CD4-positive, alpha-beta memory T cell (primary cell): ENCODE measurements at regions of chr14 and their contacts with region 1.

Region 1: DNA sequence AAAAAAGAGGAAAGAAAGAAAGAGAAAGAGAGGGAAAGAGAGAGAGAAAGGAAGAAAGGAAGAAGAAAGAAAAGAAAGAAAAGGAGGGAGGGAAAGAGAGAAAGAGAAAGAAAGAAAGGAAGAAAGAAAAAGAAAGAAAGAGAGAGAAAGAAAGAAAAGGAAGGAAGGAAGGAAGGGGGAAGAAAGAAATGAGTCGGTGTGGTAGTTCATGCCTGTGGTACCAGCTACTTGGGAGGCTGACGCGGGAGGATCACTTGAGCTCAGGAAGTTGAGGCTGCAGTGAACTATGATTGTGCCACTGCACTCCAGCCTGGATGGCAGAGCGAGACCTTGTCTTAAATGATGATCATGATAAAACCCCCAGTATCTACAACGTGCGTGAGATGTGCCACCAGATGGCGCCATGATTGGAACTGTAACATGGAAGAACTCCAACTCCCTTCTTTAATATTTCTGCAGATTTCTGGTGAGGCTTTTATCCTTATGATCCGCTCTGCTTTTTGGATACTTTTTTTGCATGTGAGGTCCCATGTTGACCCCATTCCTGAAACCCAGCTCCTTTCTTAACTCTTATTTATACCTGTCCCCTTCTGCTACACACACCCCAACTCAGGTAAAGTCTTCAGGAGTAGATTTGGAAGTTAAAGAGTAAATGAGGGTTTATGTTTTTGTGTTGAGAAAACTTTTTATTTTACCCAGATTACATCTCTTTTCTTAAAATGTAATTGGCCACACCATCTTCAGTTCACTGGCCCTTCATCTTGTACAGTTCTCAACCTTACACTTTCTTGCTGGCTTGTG is 25.6 kb downstream of the RNASE10 start:
- DNase-seq: peak; percentile 52 to 68 (median 54)
- H3K4me3 ChIP-seq: no peak overlapping the region
- H3K4me3 Mint-ChIP-seq: peak overlapping the region in 6 of 8 donors; percentile 10 to 70 (median 60)
- H3K27ac ChIP-seq: no peak overlapping the region
- H3K27ac Mint-ChIP-seq: peak overlapping the region in 2 of 7 donors; percentile 52 to 59
- H3K4me1 ChIP-seq: no peaks in the 10 kb centered on the region
- H3K4me1 Mint-ChIP-seq: peaks cover 4 to 8% (median 7%) of the 10 kb centered on the region in 4 donors
- H3K27me3 ChIP-seq: no peaks in the 10 kb centered on the region
- H3K27me3 Mint-ChIP-seq: peaks cover 0 to 5% of the 10 kb centered on the region in 2 donors

Region 2: GRCh38 chr14:20461274-20462001 is 69.5 kb before region 1 on chr14 and contains the start of gene PIP4P1:
- CTCF ChIA-PET with region 1: no interaction called
- POLR2A ChIA-PET with region 1: interaction called, 4 read pairs
- intact Hi-C with region 1: loop called (anchors 5 kb)
- DNase-seq: peak; percentile 98 to 100 (median 99)
- H3K4me3 ChIP-seq: peak within 1 kb of the TSS; percentile 64 to 76
- H3K4me3 Mint-ChIP-seq: peak within 1 kb of the TSS; percentile 89 to 96 (median 92)
- H3K27ac ChIP-seq: peak within 1 kb of the TSS; percentile 86
- H3K27ac Mint-ChIP-seq: peak within 1 kb of the TSS; percentile 92 to 99 (median 97)
- H3K4me1 ChIP-seq: peaks cover 39% of the 10 kb centered on the region
- H3K4me1 Mint-ChIP-seq: peaks cover 19 to 35% (median 23%) of the 10 kb centered on the region in 4 donors
- H3K27me3 ChIP-seq: no peaks in the 10 kb centered on the region
- H3K27me3 Mint-ChIP-seq: no peaks in the 10 kb centered on the region
- total RNA-seq, gene PIP4P1: 77.8 to 78.1 TPM

Region 3: GRCh38 chr14:20606190-20606901 is 75.4 kb after region 1 on chr14:
- CTCF ChIA-PET with region 1: interaction called, 12 read pairs
- POLR2A ChIA-PET with region 1: interaction called, 3 read pairs
- intact Hi-C with region 1: loop called (anchors 1 kb)
- DNase-seq: no peak
- H3K4me3 ChIP-seq: no peak overlapping the region
- H3K4me3 Mint-ChIP-seq: no peak overlapping the region
- H3K27ac ChIP-seq: no peak overlapping the region
- H3K27ac Mint-ChIP-seq: peak overlapping the region in 1 of 7 donors; percentile 4
- H3K4me1 ChIP-seq: peaks cover 14% of the 10 kb centered on the region
- H3K4me1 Mint-ChIP-seq: peaks cover 0 to 5% (median 0%) of the 10 kb centered on the region in 4 donors
- H3K27me3 ChIP-seq: no peaks in the 10 kb centered on the region
- H3K27me3 Mint-ChIP-seq: no peaks in the 10 kb centered on the region

Region 4: GRCh38 chr14:20652996-20653975 is 122.3 kb after region 1 on chr14:
- CTCF ChIA-PET with region 1: no interaction called
- POLR2A ChIA-PET with region 1: no interaction called
- intact Hi-C with region 1: no loop called
- DNase-seq: peak; percentile 23 to 47 (median 33)
- H3K4me3 ChIP-seq: no peak overlapping the region
- H3K4me3 Mint-ChIP-seq: peak overlapping the region in 7 of 8 donors; percentile 35 to 81 (median 62)
- H3K27ac ChIP-seq: no peak overlapping the region
- H3K27ac Mint-ChIP-seq: peak overlapping the region in 2 of 7 donors; percentile 59 to 61
- H3K4me1 ChIP-seq: peaks cover 26% of the 10 kb centered on the region
- H3K4me1 Mint-ChIP-seq: peaks cover 19 to 29% (median 22%) of the 10 kb centered on the region in 4 donors
- H3K27me3 ChIP-seq: peaks cover 29% of the 10 kb centered on the region
- H3K27me3 Mint-ChIP-seq: peaks cover 49 to 54% of the 10 kb centered on the region in 2 donors

Region 5: DNA sequence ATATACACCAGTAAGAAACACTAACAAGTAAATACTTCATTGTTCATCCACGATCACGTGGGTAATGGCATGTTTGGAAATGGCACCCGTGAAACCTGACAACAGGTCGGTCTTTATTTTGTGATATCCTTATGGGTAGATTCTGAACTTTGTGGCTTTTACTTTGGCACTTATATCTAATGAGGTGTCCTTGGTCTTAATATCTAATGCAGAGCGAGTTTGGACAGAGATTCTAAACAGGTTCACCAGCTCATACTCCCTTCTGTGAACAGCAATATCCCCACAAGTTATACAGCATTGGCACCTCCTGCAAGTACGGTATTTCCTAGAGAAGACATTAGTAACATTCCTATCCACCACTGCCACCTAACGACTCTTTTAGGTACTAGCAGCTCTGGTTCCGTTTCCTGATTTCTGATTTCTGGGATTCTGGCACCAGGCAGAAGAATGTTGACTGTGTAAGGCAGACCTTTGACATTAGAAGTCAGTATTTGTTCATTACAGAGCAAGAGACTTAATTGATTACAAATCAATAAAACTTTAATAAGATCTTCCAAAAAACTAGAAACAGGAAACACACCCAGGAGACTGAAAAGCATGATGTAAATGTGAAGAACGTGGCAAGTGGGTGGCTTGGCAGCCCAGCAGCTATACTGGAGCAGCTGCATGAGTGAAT is 160.0 kb after region 1 on chr14:
- CTCF ChIA-PET with region 1: interaction called, 3 read pairs
- POLR2A ChIA-PET with region 1: no interaction called
- intact Hi-C with region 1: loop called (anchors 1 kb)
- DNase-seq: peak; percentile 55 to 69 (median 65)
- H3K4me3 ChIP-seq: no peak overlapping the region
- H3K4me3 Mint-ChIP-seq: no peak overlapping the region
- H3K27ac ChIP-seq: no peak overlapping the region
- H3K27ac Mint-ChIP-seq: peak overlapping the region in 1 of 7 donors; percentile 3
- H3K4me1 ChIP-seq: no peaks in the 10 kb centered on the region
- H3K4me1 Mint-ChIP-seq: peaks cover 5 to 6% (median 6%) of the 10 kb centered on the region in 4 donors
- H3K27me3 ChIP-seq: no peaks in the 10 kb centered on the region
- H3K27me3 Mint-ChIP-seq: no peaks in the 10 kb centered on the region